ENCODE measurements at regions of chr18 and their contacts with region 1.

Region 1: GRCh38 chr18:63936156-63936931 is 12.8 kb upstream of the HMSD start:
- DNase-seq: peak; percentile 35
- ATAC-seq: peak; percentile 94
- H3K4me3 Mint-ChIP-seq: no peak overlapping the region
- H3K27ac Mint-ChIP-seq: no peak overlapping the region
- H3K4me1 Mint-ChIP-seq: peaks cover 3% of the 10 kb centered on the region
- H3K27me3 Mint-ChIP-seq: peaks cover 8% of the 10 kb centered on the region
- CTCF ChIP-seq: no peak

Region 2: DNA sequence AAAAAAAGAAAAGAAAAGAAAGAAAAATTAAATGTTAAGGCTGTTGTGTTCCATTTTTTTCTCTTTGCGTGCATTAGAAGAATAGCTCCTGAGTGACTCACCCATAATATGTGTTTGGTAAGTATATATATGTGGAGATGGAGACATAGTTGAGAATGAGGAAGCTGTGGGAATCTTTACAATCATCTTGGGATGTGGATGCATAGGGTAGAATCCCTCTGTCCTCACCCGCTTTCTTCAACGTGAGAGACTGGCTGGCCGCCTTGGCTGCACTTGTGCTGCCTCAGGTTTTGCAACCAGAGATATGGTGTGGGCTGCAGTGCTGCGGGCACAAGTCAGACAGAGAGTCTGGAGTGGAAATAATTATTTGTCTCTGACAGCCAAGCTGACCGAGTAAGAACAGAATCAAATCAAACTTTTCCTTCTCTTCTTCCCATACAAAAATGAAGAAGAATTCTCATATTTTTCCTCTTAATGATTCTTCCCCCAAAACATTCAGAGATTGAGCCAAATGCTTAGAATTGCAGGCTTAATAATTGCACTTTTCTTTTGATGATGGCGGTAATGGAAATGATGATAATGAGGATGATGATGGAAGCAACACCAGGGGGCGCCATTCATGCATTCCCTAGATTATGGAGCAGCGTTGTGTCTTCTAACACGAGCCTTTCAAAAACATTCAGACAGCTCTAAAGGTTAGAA is 112.7 kb before region 1 on chr18:
- CTCF ChIA-PET with region 1: no interaction called
- POLR2A ChIA-PET with region 1: no interaction called
- intact Hi-C with region 1: loop called (anchors 1 kb)
- DNase-seq: no peak
- ATAC-seq: no peak
- H3K4me3 Mint-ChIP-seq: no peak overlapping the region
- H3K27ac Mint-ChIP-seq: no peak overlapping the region
- H3K4me1 Mint-ChIP-seq: no peaks in the 10 kb centered on the region
- H3K27me3 Mint-ChIP-seq: peaks cover 6% of the 10 kb centered on the region
- CTCF ChIP-seq: no peak

Region 3: GRCh38 chr18:63949068-63949737 is 12.9 kb after region 1 on chr18 and contains the start of gene HMSD:
- CTCF ChIA-PET with region 1: interaction called, 4 read pairs
- POLR2A ChIA-PET with region 1: no interaction called
- intact Hi-C with region 1: loop called (anchors 1 kb)
- DNase-seq: peak; percentile 46
- ATAC-seq: peak; percentile 98
- H3K4me3 Mint-ChIP-seq: peak within 1 kb of the TSS; percentile 77
- H3K27ac Mint-ChIP-seq: no peak within 1 kb of the TSS
- H3K4me1 Mint-ChIP-seq: peaks cover 19% of the 10 kb centered on the region
- H3K27me3 Mint-ChIP-seq: peaks cover 13% of the 10 kb centered on the region
- CTCF ChIP-seq: no peak
- total RNA-seq, gene HMSD: 0.11 and 1.2 TPM in 2 replicates

Region 4: DNA sequence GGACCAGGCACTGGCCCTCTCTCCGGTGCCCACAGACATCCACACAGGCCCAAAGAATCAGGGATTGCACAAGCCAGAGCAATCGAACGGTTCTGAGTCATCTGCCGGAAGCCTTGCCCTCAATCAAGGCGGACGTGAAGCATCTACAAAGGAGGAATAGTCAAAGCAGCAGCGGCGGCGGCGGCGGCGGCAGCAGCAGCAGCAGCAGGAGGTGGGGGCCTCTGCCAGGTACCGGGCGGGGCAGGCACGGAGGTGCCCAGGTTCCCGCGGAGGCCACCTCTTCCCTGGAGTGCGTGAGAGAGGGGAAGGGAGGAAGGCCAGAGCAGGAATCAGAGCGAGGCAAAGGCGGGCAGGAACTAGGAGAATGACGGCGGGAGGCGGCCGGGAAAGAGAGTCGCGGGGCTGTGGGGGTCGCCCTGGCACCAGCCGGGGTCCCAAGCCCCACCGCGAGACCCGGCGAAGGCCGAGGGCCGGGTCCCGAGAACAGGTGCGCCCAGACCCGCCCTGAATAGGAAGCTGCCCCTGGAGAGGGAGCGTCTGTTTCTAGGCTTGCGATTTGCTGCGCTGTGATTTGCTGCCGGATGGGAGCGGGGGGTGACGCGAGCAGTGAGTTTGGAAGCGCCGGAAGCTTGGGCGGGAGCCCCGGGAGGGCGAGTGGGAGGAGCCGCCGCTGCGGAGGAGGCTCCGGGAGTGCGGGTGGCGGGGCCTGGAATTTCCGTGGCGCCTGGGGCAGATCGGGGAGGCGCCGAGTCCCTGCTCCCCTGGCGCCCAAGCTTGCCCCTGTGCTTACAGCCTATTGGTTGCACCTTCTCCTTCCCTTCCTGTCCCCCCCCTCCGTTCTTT is 33.8 kb after region 1 on chr18 and contains the start of gene SERPINB8:
- CTCF ChIA-PET with region 1: no interaction called
- POLR2A ChIA-PET with region 1: interaction called, 6 read pairs
- intact Hi-C with region 1: loop called (anchors 1 kb)
- DNase-seq: peak; percentile 71
- ATAC-seq: peak; percentile 82
- H3K4me3 Mint-ChIP-seq: peak within 1 kb of the TSS; percentile 95
- H3K27ac Mint-ChIP-seq: peak within 1 kb of the TSS; percentile 94
- H3K4me1 Mint-ChIP-seq: peaks cover 51% of the 10 kb centered on the region
- H3K27me3 Mint-ChIP-seq: peaks cover 6% of the 10 kb centered on the region
- CTCF ChIP-seq: no peak
- total RNA-seq, gene SERPINB8: 20.9 and 29.5 TPM in 2 replicates